WTC11 (cell line): ENCODE measurements at regions of chr1 and their contacts with region 1.

Region 1: DNA sequence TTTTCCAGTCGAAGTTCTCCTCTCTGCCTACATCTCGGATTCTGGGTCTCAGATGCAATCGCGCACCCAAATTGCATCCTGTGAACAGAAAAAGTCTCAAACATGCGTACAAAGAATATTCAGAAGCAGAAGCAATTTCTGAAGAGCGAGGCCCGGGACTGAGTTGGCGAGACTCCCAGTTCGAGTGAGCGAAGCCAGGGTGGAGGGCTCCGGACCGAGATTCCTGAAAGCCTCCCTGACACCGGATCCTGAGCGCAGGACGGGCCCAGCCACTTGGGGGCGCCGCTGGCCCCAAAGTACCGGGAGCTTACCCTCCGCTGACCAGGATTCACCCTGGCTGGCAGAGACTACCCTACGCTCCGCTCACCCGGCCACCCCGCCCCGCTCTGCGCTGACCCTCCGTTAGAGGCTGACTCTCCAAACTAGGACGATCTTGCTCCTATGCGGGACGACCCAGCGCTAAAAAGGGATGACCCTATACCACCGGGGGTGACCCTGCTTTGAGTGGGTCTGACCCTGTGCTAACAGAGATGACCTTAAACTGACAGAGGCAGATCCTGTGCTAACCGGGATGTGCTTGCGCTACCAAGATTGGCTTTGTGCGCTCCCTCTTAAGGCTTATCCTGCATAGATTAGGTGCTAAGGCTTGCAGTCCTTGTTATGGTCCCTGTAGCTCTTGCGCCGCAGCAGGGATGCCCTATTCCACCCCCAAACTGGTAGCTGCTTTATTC is 12.1 kb downstream of the FOXD2 start:
- DNase-seq: peak; percentile 89
- ATAC-seq: peak; percentile 91
- H3K4me3 Mint-ChIP-seq: peak overlapping the region; percentile 58
- H3K27ac Mint-ChIP-seq: no peak overlapping the region
- H3K4me1 Mint-ChIP-seq: peaks cover 36% of the 10 kb centered on the region
- H3K27me3 Mint-ChIP-seq: no peaks in the 10 kb centered on the region; the same call in none of the 2 replicates
- CTCF ChIP-seq: peak; percentile 58

Region 2: GRCh38 chr1:47399138-47399845 is 50.7 kb before region 1 on chr1:
- CTCF ChIA-PET with region 1: no interaction called
- POLR2A ChIA-PET with region 1: no interaction called
- DNase-seq: no peak
- ATAC-seq: no peak
- H3K4me3 Mint-ChIP-seq: no peak overlapping the region
- H3K27ac Mint-ChIP-seq: no peak overlapping the region
- H3K4me1 Mint-ChIP-seq: no peaks in the 10 kb centered on the region
- H3K27me3 Mint-ChIP-seq: peaks cover 55% of the 10 kb centered on the region
- CTCF ChIP-seq: no peak

Region 3: DNA sequence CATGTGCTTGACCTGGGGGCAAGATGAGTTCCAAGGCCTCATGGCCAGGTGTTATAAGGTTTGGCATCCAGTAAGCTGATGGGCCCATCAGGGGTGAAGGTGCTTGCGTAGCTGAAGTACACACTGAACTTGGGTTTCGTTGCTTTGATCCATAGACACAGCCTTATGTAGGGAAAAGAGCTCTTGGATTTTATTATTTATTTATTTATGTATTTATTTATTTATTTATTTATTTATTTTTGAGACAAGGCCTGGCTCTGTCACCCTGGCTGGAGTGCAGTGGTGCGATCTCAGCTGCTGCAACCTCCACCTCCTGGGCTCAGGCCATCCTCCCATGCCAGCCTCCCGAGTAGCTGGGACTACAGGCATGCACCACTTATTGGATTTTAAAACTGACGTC is 51.1 kb after region 1 on chr1:
- CTCF ChIA-PET with region 1: interaction called, 11 read pairs
- POLR2A ChIA-PET with region 1: no interaction called
- DNase-seq: no peak
- ATAC-seq: no peak
- H3K4me3 Mint-ChIP-seq: no peak overlapping the region
- H3K27ac Mint-ChIP-seq: no peak overlapping the region
- H3K4me1 Mint-ChIP-seq: no peaks in the 10 kb centered on the region; the same call in 1 of the 2 replicates
- H3K27me3 Mint-ChIP-seq: peaks cover 43% of the 10 kb centered on the region
- CTCF ChIP-seq: no peak

Region 4: GRCh38 chr1:47521034-47521881 is 71.3 kb after region 1 on chr1:
- CTCF ChIA-PET with region 1: interaction called, 16 read pairs
- POLR2A ChIA-PET with region 1: no interaction called
- DNase-seq: no peak
- ATAC-seq: no peak
- H3K4me3 Mint-ChIP-seq: no peak overlapping the region
- H3K27ac Mint-ChIP-seq: no peak overlapping the region
- H3K4me1 Mint-ChIP-seq: peaks cover 32% of the 10 kb centered on the region
- H3K27me3 Mint-ChIP-seq: peaks cover 39% of the 10 kb centered on the region
- CTCF ChIP-seq: no peak

Region 5: DNA sequence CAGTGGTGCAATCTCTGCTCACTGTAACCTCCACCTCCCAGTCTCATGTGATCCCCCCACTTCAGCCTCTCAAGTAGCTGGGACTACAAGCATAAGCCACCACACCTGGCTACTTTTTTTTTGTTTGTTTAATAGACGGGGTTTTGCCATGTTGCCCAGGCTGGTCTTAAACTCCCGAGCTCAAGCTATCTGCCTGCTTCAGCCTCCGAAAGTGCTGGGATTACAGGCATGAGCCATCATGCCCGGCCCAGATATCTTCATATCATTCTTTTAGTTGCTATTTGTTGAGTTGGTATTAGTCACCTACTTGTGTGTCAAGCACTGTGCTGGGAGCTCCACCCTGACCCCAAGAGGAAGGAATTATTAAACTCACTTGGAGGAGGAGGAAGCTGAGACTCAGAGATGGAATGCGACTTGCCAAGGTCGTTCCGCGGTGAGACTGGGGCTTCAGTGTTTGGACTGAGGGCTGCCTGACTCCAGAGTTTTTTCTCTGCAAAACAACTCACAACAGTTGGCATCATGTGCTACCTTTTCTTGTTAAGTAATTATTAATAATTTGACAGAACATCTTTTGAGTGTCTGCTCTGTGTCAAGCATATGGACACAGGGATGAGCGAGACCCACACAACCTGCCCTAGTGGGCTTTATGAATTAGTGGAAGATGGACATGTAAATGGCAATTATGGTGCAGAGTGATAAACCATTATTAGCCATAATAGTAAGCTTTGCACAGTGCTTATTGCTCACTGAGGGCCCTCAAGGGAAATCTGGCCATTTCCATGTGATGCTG is 119.9 kb after region 1 on chr1:
- CTCF ChIA-PET with region 1: interaction called, 10 read pairs
- POLR2A ChIA-PET with region 1: no interaction called
- DNase-seq: peak; percentile 51
- ATAC-seq: peak; percentile 84
- H3K4me3 Mint-ChIP-seq: no peak overlapping the region
- H3K27ac Mint-ChIP-seq: no peak overlapping the region
- H3K4me1 Mint-ChIP-seq: peaks cover 55% of the 10 kb centered on the region
- H3K27me3 Mint-ChIP-seq: peaks cover 41% of the 10 kb centered on the region
- CTCF ChIP-seq: no peak

Region 6: GRCh38 chr1:47710329-47711071 is 260.5 kb after region 1 on chr1:
- CTCF ChIA-PET with region 1: interaction called, 46 read pairs
- POLR2A ChIA-PET with region 1: no interaction called
- DNase-seq: peak; percentile 86
- ATAC-seq: peak; percentile 56
- H3K4me3 Mint-ChIP-seq: peak overlapping the region; percentile 64
- H3K27ac Mint-ChIP-seq: no peak overlapping the region
- H3K4me1 Mint-ChIP-seq: peaks cover 29% of the 10 kb centered on the region
- H3K27me3 Mint-ChIP-seq: peaks cover 99% of the 10 kb centered on the region
- CTCF ChIP-seq: peak; percentile 97